ENCODE measurements at regions of chr3 and their contacts with region 1.

Region 1: GRCh38 chr3:143269751-143270150 is 150.2 kb downstream of the CHST2 start:
- DNase-seq: no peak
- H3K4me3 ChIP-seq: no peak overlapping the region
- H3K4me3 Mint-ChIP-seq: no peak overlapping the region
- H3K27ac Mint-ChIP-seq: no peak overlapping the region
- H3K4me1 ChIP-seq: no peaks in the 10 kb centered on the region
- H3K4me1 Mint-ChIP-seq: no peaks in the 10 kb centered on the region
- H3K27me3 ChIP-seq: no peaks in the 10 kb centered on the region
- H3K27me3 Mint-ChIP-seq: peaks cover 3% of the 10 kb centered on the region
- CTCF ChIP-seq: no peak

Region 2: GRCh38 chr3:143433787-143434378 is 164.1 kb after region 1 on chr3:
- CTCF ChIA-PET with region 1: no interaction called
- POLR2A ChIA-PET with region 1: no interaction called
- intact Hi-C with region 1: loop called (anchors 1 kb)
- DNase-seq: no peak
- H3K4me3 ChIP-seq: no peak overlapping the region
- H3K4me3 Mint-ChIP-seq: no peak overlapping the region
- H3K27ac Mint-ChIP-seq: no peak overlapping the region
- H3K4me1 ChIP-seq: peaks cover 6% of the 10 kb centered on the region
- H3K4me1 Mint-ChIP-seq: no peaks in the 10 kb centered on the region
- H3K27me3 ChIP-seq: no peaks in the 10 kb centered on the region
- H3K27me3 Mint-ChIP-seq: peaks cover 4% of the 10 kb centered on the region
- CTCF ChIP-seq: peak in 1 of 2 experiments; percentile 15